HEK293T (cell line): ENCODE measurements at regions of chr7 and their contacts with region 1.

Region 1: DNA sequence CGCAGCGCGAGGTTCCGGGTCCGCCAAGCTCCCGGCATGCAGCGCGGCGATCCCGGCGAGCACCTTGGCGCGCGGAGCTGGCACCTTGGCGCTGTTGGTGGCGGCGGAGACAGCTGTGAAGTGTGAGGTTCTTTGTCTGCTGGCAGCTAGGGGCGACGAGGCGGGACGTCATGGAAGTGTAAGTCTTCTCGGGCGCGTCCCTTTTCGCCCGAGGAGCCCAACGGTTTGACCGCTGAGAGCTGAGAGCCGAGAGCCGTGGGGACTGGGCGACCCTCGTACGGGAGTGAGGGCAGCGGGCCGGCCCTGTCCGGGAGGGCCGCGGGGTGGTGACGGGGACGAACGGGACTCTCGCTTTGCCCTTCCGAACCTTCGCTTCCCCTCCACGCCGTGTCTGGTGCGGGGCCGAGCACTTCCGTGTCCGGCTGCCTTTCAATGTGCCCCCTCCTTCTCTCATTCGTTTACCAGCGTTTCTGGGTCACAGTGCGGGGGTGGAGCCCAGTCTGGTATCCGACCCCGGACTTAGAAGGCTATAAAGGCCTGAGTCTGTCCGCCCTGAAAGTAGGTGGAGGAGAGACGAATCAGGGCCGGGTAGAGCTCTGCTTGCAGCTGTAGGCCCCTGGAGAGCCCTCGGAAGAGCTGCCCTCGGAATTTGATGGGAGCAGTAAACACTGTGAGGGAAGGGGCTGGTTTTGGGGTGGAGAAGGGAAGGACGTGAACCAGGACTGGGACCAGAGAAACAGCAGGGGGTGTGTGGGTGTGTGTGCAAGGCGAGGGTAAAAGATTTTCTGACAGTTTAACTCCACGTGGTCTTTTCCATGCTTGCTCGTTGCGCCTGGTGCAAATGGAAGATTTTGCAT is at the start of gene CRCP:
- DNase-seq: peak; percentile 77

Region 2: DNA sequence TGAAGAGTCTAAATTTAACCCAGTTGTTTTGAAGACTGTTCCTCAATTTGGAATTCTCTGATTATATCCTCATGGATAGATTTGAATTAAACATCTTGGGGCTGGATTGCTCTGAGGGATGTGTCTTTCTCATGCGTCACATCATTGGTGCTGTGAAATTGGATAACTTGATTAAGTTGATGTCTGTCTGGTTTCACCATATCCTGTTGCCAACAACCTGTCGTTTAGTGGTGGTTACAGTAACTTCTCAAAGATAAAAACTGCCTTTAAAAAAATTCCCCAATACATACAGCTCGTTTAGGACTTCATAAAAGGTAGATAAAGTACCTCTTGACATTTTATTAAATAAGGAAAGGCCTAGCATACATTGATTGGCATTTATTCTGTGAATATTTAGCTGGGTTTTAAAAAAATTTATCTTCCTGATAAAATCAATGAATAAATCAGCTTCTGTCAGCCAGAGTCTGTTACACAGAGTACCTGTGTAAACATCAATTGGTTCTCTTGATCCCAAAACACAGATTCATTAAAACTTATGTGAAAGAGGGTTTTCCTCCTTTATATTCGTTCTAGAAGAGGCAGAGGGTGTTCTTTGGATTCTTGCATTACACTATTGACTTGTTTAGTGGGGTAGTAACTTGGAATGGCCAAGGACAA is 10.2 kb after region 1 on chr7:
- CTCF ChIA-PET with region 1: no interaction called
- POLR2A ChIA-PET with region 1: interaction called, 21 read pairs
- DNase-seq: no peak